ENCODE measurements at regions of chr10 and their contacts with region 1.

Region 1: DNA sequence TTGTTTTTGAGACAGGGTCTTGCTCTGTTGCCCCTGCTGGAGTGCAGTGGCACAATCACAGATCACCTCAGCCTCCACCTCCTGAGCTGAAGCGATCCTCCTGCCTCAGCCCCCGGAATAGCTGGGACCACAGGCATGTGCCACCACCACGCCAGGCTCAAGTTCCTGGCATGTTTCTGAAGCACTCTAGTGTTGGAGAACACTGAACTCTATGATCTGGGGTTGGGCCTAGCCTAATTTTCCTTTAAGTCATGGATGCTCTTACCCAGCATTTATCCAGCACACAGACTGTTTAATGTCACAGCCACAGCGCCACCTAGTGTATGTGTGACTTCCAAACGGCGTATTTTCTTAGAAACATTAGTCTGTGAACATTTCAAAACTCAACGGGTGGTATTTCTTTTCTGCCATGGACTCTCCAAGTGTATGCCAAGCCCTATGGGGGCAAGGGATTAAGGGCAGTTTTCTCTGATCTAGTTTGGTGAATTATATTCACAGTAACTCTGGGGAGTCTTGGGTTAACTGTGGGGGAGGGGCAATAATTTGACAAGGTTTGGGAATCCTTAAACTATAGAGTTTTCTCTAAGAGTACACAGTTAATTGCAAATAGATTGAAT is 91.8 kb downstream of the CREM start:
- DNase-seq: peak; percentile 100
- ATAC-seq: peak; percentile 86
- H3K4me3 ChIP-seq: peak overlapping the region; percentile 5; the same call in 1 of the 2 replicates
- H3K27ac ChIP-seq: no peak overlapping the region
- H3K4me1 ChIP-seq: no peaks in the 10 kb centered on the region
- H3K27me3 ChIP-seq: no peaks in the 10 kb centered on the region
- CTCF ChIP-seq: peak; percentile 100

Region 2: DNA sequence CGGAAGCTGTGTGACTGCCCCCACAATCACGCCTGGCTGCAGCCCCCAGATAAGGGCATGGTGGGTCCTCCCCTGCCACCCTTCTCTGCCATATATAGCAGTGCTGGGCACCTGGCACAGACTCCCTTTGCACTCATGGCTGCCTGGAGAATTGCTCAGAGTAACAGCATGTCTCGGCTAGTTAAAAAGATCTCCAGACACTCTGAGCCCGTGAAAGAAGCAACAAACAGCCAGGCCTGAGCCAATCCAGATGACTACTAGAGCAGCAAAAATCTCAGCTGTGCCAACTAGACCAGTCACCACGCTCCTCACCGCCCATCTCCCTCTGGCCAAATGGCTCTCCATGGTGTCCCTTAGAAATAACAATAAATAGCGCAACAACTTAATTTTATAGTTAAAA is 474.6 kb before region 1 on chr10:
- CTCF ChIA-PET with region 1: no interaction called
- POLR2A ChIA-PET with region 1: no interaction called
- intact Hi-C with region 1: no loop called
- DNase-seq: no peak
- ATAC-seq: no peak
- H3K4me3 ChIP-seq: no peak overlapping the region
- H3K27ac ChIP-seq: no peak overlapping the region
- H3K4me1 ChIP-seq: peaks cover 3% of the 10 kb centered on the region; the same call in 1 of the 2 replicates
- H3K27me3 ChIP-seq: no peaks in the 10 kb centered on the region
- CTCF ChIP-seq: no peak

Region 3: DNA sequence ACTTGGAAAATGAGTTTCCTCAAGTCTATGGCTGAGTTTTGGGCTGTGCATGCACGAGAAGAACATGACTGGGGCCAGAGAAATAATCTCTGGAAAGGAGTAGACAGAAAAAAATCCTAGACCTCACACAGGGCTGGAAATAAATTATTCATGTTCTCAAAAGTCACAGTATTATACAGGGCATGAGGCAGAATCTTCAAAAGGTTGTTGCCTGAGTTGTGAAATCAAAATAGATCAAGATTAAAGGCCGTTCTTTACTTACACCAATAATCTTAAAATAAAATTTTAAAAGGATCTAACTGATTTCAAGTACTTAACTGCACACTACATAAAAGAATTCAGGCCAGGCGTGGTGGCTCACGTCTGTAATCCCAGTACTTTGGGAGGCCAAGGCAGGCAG is 105.9 kb before region 1 on chr10:
- CTCF ChIA-PET with region 1: interaction called, 11 read pairs
- POLR2A ChIA-PET with region 1: no interaction called
- intact Hi-C with region 1: no loop called
- DNase-seq: no peak
- ATAC-seq: no peak
- H3K4me3 ChIP-seq: no peak overlapping the region
- H3K27ac ChIP-seq: no peak overlapping the region
- H3K4me1 ChIP-seq: no peaks in the 10 kb centered on the region
- H3K27me3 ChIP-seq: no peaks in the 10 kb centered on the region
- CTCF ChIP-seq: no peak

Region 4: GRCh38 chr10:35119378-35119777 is 99.1 kb before region 1 on chr10:
- CTCF ChIA-PET with region 1: interaction called, 18 read pairs
- POLR2A ChIA-PET with region 1: no interaction called
- intact Hi-C with region 1: loop called (anchors 1 kb)
- DNase-seq: no peak
- ATAC-seq: no peak
- H3K4me3 ChIP-seq: no peak overlapping the region
- H3K27ac ChIP-seq: no peak overlapping the region
- H3K4me1 ChIP-seq: no peaks in the 10 kb centered on the region
- H3K27me3 ChIP-seq: no peaks in the 10 kb centered on the region
- CTCF ChIP-seq: no peak

Region 5: DNA sequence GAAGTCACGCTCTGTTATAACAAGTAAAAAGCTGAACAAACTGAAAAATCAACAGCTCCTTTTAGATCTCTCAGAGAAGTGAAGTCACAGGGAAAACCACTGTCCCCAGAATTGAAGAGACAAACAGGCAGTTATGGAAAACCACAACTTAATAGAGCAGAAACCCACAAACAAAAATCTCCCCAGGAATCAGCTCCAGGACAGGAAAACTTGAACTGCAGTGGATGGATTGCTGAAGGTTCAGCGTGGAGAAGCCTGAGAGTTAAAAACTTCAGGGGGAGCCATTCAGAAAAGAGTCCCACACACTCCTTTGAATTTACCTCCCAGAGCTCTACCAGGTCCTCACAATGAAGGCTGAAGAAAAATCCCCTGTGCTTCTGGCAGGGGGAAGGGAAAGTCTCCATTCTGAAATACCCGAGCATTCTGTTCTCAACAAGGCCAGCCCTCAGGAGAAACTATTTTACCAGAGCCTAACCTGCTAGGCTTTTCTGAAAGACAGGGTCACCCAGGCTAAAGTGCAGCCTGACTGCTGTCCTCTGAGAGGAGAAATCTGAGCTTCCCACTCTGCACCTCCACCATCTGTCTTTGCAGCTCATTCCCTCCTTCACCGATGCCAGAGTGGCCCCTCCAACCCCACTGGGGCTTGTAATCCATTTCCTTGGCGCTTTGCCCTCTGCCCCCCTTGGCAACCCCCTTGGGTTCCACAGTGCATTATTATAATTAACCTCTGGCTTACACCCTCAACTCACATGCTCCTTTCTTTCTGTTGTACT is 52.8 kb after region 1 on chr10:
- CTCF ChIA-PET with region 1: no interaction called
- POLR2A ChIA-PET with region 1: no interaction called
- intact Hi-C with region 1: no loop called
- DNase-seq: no peak
- ATAC-seq: no peak
- H3K4me3 ChIP-seq: no peak overlapping the region
- H3K27ac ChIP-seq: no peak overlapping the region
- H3K4me1 ChIP-seq: peaks cover 8% of the 10 kb centered on the region
- H3K27me3 ChIP-seq: no peaks in the 10 kb centered on the region
- CTCF ChIP-seq: no peak

Measured in PC-3 (cell line).